Activated naive CD8-positive, alpha-beta T cell treated with anti-CD3 and anti-CD28 coated beads, Interleukin-2, amount 10 ng/mL, durations not matched to agents 7 days and 5 days (primary cell): ENCODE measurements at regions of chr21 and their contacts with region 1.

Region 1: DNA sequence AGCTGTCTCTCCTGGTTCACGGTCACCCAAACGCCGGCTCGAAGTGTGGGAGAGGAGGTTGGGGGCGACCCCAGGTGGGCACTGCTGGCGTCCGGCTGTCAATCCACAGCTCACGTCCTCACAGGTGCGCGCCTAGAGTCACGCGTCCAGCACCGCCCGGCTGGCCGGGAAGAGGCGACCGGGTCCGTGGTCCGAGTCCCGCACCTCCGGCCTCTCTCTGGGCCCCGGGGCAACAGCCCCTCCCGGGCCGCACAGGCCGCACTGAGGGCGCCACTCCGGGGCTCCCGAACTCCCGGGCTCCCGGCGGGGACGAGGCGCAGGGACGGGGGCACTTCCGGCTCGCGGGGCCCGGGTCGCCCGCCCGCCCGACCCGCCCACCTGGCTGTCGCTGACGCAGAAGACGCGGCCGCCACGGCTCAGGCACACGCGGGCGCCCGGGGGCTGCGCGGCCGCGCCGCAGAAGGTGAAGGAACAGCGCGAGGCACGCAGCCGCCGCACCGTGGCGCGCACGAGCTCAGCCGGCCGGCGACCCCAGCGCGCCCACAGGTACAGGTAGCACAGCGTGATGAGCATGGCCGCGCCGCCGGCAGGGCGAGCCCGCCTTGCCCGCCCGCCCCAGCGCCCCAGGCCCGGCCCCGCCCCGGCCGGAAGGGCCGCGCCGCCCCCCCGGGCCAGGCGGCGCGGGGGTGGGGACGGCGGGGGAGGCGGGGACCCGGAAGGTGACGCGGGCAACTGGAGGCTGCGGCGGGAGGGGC is at the start of gene HLCS:
- DNase-seq: peak; percentile 86
- ATAC-seq: peak; percentile 89
- H3K4me3 Mint-ChIP-seq: peak within 1 kb of the TSS; percentile 84
- H3K27ac Mint-ChIP-seq: peak within 1 kb of the TSS; percentile 85
- H3K4me1 Mint-ChIP-seq: peaks cover 18% of the 10 kb centered on the region
- H3K27me3 Mint-ChIP-seq: no peaks in the 10 kb centered on the region
- total RNA-seq, gene HLCS: 17.4 to 17.8 TPM

Region 2: DNA sequence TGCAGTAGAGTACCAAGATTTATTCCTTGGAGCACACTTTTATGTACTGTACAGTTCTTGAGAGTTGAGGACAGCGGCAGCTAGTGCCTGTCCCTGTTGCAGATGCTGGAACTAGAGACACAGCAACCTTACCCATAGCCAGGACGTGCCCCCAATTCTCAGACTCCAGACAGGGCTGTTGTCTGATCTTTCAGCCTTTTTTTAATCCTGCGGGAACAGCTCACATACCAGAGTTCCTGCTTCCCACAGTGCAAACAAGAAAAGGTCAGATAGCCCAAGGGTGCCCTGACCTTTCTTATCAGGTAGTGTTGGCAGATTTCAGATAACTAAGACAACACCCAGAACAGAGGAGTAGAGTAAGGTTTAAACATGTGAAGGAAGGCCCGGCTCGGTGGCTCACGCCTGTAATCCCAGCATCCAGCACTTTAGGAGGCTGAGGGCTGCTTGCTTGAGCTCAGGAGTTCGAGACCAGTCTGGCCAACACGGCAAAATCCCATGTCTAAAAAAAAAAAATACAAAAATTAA is 731.1 kb before region 1 on chr21:
- POLR2A ChIA-PET with region 1: interaction called, 10 read pairs
- DNase-seq: no peak
- ATAC-seq: no peak
- H3K4me3 Mint-ChIP-seq: no peak overlapping the region
- H3K27ac Mint-ChIP-seq: no peak overlapping the region
- H3K4me1 Mint-ChIP-seq: peaks cover 7% of the 10 kb centered on the region
- H3K27me3 Mint-ChIP-seq: no peaks in the 10 kb centered on the region

Region 3: DNA sequence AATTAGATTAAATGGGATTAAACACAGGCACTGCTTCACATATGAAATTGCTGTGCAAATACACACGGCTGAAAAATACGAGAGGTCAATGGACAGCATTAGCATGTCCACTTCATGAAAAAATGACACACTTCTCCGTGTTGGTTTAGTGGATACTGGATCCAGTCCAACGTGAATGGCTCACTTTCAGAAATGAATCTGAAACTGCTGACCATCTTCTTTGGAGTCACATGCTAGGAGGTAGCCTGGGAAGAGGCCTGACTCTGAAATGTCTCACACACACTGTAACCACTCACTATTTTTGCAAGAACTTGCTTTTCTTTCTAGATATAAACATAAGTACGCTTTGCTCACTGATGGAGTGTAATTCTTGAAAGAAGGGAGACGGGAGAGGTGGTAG is 127.1 kb before region 1 on chr21:
- POLR2A ChIA-PET with region 1: no interaction called
- DNase-seq: no peak
- ATAC-seq: no peak
- H3K4me3 Mint-ChIP-seq: no peak overlapping the region
- H3K27ac Mint-ChIP-seq: no peak overlapping the region
- H3K4me1 Mint-ChIP-seq: no peaks in the 10 kb centered on the region
- H3K27me3 Mint-ChIP-seq: no peaks in the 10 kb centered on the region

Region 4: GRCh38 chr21:36909901-36910561 is 56.2 kb before region 1 on chr21:
- POLR2A ChIA-PET with region 1: no interaction called
- DNase-seq: no peak
- ATAC-seq: no peak
- H3K4me3 Mint-ChIP-seq: no peak overlapping the region
- H3K27ac Mint-ChIP-seq: no peak overlapping the region
- H3K4me1 Mint-ChIP-seq: no peaks in the 10 kb centered on the region
- H3K27me3 Mint-ChIP-seq: no peaks in the 10 kb centered on the region

Region 5: DNA sequence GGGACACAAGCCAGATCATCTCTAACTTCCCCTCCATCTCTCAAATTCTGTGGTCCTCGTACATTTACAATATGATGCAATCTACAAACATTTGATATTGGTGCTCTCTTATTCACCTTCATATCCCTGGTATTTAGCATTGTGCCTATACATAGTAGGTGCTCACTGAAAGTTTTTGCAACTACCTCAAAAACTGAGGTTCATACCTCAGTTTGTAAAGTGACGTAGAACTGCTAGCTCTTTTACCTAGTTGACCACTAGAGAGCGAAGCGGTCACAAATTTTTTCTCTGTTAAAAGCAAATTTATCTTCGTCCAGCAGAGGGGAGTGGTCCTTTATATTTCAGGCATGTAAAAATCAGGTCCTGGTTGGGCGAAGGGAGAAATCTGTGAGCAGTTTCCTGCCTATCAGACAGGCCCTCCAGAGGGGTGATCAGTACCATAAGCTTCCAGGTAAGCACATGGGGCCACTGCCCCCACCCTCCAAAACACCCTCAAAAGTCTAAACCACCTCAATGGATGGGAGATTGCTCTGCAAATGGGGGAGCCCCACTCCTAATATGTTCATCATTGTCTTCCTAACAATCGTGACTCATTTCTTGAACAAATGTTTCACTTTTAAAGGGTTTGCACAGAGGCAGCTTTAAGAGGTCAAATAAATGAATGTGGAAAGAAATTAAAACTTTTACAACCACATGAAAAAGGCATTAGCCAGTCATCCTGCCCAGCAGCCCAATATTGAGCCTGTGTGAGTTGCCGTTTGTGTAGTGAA is 10.8 kb after region 1 on chr21:
- POLR2A ChIA-PET with region 1: interaction called, 21 read pairs
- DNase-seq: peak; percentile 46
- ATAC-seq: peak; percentile 67
- H3K4me3 Mint-ChIP-seq: peak overlapping the region; percentile 33
- H3K27ac Mint-ChIP-seq: peak overlapping the region; percentile 79
- H3K4me1 Mint-ChIP-seq: peaks cover 24% of the 10 kb centered on the region
- H3K27me3 Mint-ChIP-seq: peaks cover 4% of the 10 kb centered on the region

Region 6: GRCh38 chr21:36989699-36990507 is 23.7 kb after region 1 on chr21:
- POLR2A ChIA-PET with region 1: interaction called, 13 read pairs
- DNase-seq: peak; percentile 93
- ATAC-seq: peak; percentile 94
- H3K4me3 Mint-ChIP-seq: peak overlapping the region; percentile 88
- H3K27ac Mint-ChIP-seq: peak overlapping the region; percentile 91
- H3K4me1 Mint-ChIP-seq: peaks cover 29% of the 10 kb centered on the region
- H3K27me3 Mint-ChIP-seq: no peaks in the 10 kb centered on the region